ENCODE measurements at regions of chr12 and their contacts with region 1.

Region 1: DNA sequence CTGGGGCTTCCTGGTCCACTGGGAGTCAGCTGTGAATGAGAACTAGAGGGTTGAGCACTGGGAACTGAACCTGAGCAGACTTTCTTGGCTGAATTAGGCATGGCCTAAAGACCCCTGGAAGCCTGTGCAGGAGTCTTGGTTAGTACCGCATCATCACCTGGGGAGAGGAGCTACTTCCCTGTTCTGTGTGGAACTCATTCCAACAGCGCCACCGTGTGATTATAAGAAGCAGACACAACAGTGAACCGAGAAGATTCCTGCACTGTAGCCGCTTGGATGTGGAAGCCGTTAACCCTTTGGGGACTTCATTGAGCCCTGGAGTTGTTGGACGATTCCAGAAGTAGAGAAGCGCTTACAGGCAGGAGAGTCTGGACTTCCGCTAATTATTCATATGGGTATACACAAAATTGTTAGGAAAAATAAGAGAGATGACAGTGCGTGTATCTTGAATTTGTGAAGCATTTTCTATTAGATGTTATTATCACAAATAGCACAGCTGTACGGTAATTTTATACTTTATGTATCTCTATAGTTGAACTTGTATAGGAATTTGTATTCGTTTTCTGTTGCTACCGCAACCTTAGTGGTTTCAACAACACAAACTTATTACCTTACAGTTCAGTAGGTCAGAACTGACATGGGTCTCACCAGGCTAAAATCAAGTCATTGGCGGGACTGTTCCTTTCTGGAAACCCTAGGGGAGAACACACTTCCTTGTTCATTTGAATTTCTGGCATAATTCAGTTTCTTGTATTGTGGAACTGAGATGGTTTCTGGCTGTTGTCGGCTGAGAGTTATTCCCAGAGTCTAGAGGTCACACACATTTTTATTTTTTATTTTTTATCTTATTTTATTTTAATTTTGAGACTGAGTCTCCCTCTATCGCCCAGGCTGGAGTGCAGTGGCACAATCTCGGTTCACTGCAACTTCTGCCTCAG is 100.7 kb downstream of the C2CD5 start:
- DNase-seq: peak in 4 of 5 donors; percentile 64 to 95 (median 82)
- H3K4me3 ChIP-seq: no peak overlapping the region
- H3K27ac ChIP-seq: no peak overlapping the region
- H3K4me1 ChIP-seq: no peaks in the 10 kb centered on the region
- H3K27me3 ChIP-seq: no peaks in the 10 kb centered on the region
- CTCF ChIP-seq: peak; percentile 78

Region 2: DNA sequence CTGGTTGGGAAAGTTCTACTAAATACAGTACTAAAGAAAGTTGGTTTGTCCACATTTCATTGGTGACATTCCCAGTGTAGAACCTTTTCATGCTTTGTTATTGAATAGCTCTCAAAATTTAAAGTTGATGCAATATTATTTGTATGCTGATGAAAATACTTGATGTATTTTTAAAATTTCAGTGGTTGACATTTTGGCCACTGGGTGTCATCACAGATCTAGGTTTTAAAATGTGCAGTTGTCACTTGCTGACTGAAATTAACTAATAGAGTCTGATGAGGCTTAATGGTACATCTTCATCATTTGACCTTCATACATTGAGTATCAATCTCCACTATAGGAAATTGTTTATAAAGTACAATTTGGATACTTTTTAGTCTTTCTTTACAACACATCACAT is 360.5 kb before region 1 on chr12:
- intact Hi-C with region 1: loop called (anchors 10 kb)
- DNase-seq: peak in 2 of 5 donors; percentile 25 to 65
- H3K4me3 ChIP-seq: no peak overlapping the region
- H3K27ac ChIP-seq: no peak overlapping the region
- H3K4me1 ChIP-seq: no peaks in the 10 kb centered on the region
- H3K27me3 ChIP-seq: no peaks in the 10 kb centered on the region
- CTCF ChIP-seq: peak; percentile 26

Region 3: DNA sequence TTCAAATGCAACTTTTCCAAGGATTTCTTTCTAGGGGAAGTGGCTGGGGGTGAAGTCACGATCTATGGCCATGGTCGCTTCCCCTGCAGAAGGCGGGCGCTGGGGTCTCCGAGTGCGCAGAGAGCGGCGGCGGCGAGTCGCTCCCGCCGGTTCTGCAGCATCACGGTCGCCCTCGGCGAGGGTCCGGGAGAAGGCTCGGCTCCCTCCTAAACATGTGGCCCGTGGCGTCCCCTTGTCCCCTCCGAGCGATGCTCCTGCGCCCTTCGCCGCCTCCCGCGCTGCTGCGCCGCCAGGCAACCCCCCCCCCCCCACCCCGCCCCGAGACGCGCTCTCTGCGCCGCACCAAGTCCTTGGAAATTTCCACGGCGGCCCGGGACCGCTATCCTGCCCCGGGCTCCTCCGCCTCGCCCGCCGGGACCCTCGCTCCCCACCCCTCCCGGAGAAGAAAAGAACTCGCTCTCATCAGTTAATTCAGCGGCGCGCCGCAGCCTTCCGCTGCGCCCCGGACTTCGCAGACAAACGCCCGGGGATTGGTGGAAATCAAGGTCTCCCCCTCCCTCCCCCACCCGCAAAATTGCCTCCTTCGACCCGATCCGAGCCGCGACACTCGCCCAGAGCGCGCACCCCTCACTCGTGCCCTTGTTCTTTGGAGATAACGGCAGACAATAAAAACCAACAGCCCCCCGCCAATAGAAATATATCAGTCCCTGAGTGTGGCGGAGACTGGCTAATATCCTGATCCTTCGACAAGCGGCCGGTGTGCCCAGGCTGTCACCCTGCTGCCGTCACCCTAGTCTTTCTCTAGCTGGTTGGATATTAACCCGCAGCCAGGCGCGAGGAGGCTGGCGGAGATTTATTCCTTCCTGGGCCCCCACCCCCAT is 109.0 kb before region 1 on chr12 and contains the start of gene ST8SIA1:
- intact Hi-C with region 1: loop called (anchors 10 kb)
- DNase-seq: peak in 3 of 5 donors; percentile 8 to 81 (median 74)
- H3K4me3 ChIP-seq: peak within 1 kb of the TSS; percentile 73 to 79 (median 75)
- H3K27ac ChIP-seq: no peak within 1 kb of the TSS
- H3K4me1 ChIP-seq: no peaks in the 10 kb centered on the region
- H3K27me3 ChIP-seq: peaks cover 3% of the 10 kb centered on the region
- CTCF ChIP-seq: no peak
- total RNA-seq, gene ST8SIA1: 4.7 TPM

Region 4: DNA sequence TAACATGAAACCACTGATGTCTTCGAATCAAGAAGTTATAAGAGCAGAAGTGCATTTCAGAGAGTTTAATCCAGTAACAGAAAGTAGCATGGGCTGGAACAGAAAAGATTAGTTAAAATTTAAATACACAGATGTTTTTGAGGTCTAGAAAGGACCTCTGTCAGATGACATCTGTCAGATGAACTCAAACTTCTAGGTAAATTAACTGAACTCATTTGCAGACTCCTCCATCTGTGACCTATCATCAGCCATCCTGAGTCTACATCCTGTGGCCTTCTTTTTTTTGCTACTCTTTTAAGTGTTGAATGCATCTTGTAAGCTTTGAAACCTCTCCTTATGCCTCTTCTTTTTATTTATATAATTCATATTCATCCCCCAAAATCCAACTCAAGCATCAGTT is 47.4 kb after region 1 on chr12:
- intact Hi-C with region 1: no loop called
- DNase-seq: no peak
- H3K4me3 ChIP-seq: no peak overlapping the region
- H3K27ac ChIP-seq: no peak overlapping the region
- H3K4me1 ChIP-seq: no peaks in the 10 kb centered on the region
- H3K27me3 ChIP-seq: no peaks in the 10 kb centered on the region
- CTCF ChIP-seq: no peak